Astrocyte of the cerebellum (primary cell): ENCODE measurements at regions of chr9 and their contacts with region 1.

Region 1: GRCh38 chr9:80797831-80798688 is 891.3 kb downstream of the TLE1 start:
- DNase-seq: peak; percentile 92
- H3K4me3 ChIP-seq: no peak overlapping the region
- CTCF ChIP-seq: no peak

Region 2: DNA sequence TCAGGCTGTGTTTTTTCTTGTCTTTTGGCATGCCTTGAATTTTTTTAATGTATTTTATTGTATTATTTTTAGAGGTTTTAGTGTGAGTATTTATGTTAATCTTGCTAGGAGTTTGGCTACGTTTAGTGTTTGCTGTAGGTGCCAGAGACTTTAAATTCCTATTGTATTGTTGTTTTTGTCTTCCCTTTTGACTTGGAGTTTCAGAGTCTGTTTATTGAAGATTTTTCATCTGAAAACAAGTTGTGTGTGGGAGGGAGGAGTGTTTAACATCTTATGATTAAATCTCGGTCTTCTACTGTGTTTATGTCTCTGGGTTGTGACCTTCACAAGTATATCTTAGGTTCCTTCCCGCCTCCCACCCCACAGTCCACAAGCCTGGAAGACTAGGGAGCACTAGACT is 65.5 kb before region 1 on chr9:
- in situ Hi-C with region 1: no loop called
- DNase-seq: no peak
- H3K4me3 ChIP-seq: no peak overlapping the region
- CTCF ChIP-seq: no peak

Region 3: GRCh38 chr9:80763536-80763935 is 34.5 kb before region 1 on chr9:
- in situ Hi-C with region 1: no loop called
- DNase-seq: no peak
- H3K4me3 ChIP-seq: no peak overlapping the region
- CTCF ChIP-seq: no peak

Region 4: DNA sequence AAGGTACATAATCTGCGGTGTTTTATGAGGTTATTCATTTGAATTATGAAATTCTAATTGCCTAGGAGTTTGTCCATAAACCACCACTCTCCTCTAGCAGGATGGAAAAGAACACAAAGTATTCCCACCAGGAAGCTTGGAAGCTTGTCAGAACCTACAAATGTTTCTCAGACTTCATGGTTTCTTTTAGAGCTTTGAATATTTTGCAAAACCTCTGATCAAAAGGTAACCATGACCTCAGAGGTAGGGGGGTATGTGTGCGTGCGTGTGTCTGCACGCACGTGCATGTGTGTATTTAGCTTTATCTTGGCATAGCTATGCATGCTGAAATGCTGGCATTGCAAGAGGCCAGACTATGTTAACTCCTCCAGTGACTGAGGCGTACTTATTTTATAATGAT is 44.3 kb after region 1 on chr9:
- in situ Hi-C with region 1: loop called (anchors 5 kb)
- DNase-seq: peak; percentile 96
- H3K4me3 ChIP-seq: no peak overlapping the region
- CTCF ChIP-seq: no peak